Mammary epithelial cell (primary cell): ENCODE measurements at regions of chr7 and their contacts with region 1.

Region 1: DNA sequence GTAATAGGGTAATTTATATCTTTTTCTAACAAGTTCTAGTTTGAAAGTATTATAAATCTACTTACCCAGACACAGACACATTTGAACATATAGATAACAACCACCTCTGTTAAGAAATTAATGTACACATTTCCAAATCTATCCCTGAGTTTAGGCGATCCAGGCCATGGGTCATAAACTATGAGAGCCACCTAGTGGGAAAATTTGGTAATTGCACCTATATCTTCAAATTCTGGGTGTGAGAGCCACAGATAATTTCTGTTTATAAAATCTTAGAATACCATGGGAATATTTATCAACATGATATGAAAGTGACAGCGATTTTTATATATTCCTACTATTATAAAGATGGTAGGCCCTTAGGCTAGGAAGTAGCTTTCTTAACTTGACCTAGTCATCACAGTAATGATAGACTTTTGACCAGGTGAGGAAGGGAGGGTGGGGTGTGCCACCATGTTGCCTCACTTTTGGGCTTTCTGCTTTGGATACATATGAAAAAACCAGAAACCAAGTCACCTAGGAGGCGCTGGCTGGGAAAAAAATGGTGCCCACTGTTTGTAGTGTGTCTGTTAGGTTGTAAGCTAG is 8.0 kb upstream of the EPHA1 start:
- DNase-seq: no peak
- H3K4me3 ChIP-seq: peak overlapping the region in 2 of 3 experiments; percentile 33 to 38
- H3K27ac ChIP-seq: peak overlapping the region; percentile 89
- H3K4me1 ChIP-seq: peaks cover 33% of the 10 kb centered on the region
- H3K27me3 ChIP-seq: no peaks in the 10 kb centered on the region
- CTCF ChIP-seq: peak; percentile 61 to 70

Region 2: DNA sequence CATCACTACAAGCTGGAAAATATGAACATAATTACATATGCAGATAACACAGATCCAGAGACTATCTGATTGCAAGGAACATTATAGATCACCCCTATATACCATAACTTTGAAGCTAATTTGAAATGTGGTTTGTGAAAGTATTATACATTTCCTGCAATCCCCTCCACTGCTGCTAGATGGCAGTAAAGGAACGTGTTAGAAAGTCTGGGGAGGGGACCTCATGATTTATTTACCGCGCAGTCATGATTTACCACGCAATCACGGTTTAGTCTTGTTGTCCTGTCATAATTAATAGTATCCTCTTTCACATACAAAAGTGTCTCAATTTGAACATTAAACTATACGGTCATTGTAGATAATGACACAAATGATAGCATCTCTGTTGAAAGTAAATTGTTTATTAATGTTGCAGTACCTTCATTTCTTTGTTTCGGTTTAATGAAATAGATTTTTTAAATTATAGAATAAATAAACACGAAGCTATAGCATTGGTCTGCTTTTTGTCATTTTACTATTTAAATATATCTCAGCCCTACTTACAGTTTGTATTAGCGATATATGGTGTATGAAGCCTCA is 812.7 kb before region 1 on chr7:
- CTCF ChIA-PET with region 1: no interaction called
- dilution Hi-C with region 1: no loop called
- in situ Hi-C with region 1: no loop called
- intact Hi-C with region 1: no loop called
- DNase-seq: peak; percentile 32
- H3K4me3 ChIP-seq: no peak overlapping the region
- H3K27ac ChIP-seq: no peak overlapping the region
- H3K4me1 ChIP-seq: no peaks in the 10 kb centered on the region
- H3K27me3 ChIP-seq: no peaks in the 10 kb centered on the region
- CTCF ChIP-seq: peak; percentile 88 to 89

Region 3: DNA sequence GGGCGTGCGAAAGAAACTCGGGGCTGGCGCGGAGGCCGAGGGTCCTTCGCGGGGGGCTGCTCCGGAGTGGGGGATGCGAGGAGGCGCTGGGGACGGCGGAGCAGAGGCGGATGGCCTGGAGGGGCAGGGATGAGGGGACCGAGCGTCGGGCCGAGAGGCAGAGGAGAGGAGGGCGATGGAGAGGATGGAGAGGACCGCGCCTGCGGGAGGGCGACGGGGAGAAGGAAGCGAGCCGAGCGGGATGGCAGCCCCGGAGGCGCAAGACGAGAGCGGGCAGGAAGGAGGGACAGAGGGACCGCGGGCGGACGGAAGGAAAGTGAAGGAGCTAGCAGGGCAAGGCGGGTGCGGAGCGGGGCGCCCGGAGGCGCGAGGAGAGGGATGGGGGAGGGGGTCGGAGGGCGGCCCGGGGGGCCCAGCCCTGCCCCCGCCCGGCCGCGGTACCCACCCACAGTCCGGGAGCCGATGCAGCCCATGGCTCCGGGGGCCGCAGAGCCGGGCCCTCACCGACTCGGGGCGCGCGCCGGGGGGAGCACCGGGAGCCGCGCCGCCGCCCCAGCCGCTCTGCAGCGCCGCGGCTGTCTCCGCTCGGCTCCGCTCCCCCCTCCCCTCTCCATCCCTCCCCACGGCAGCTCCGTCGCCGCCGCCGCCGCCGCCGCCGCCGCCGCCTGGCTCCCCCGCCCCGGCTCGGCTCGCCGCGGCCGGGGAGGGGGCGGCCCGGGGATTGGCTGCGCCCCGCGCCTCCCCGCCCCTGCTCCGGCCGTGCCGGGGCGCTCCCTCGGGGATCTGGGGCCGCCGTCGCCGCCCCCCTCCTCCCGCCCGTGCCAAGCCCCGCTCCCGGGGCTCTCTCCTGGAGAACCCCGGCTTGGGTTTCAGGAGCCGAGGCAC is 54.3 kb before region 1 on chr7 and contains the start of gene FAM131B:
- CTCF ChIA-PET with region 1: no interaction called
- dilution Hi-C with region 1: no loop called
- in situ Hi-C with region 1: no loop called
- intact Hi-C with region 1: no loop called
- DNase-seq: no peak
- H3K4me3 ChIP-seq: peak within 1 kb of the TSS; percentile 21 to 59 (median 53)
- H3K27ac ChIP-seq: no peak within 1 kb of the TSS
- H3K4me1 ChIP-seq: peaks cover 4% of the 10 kb centered on the region
- H3K27me3 ChIP-seq: peaks cover 17% of the 10 kb centered on the region
- CTCF ChIP-seq: no peak
- total RNA-seq, gene FAM131B: 0.71 to 1.5 TPM

Region 4: DNA sequence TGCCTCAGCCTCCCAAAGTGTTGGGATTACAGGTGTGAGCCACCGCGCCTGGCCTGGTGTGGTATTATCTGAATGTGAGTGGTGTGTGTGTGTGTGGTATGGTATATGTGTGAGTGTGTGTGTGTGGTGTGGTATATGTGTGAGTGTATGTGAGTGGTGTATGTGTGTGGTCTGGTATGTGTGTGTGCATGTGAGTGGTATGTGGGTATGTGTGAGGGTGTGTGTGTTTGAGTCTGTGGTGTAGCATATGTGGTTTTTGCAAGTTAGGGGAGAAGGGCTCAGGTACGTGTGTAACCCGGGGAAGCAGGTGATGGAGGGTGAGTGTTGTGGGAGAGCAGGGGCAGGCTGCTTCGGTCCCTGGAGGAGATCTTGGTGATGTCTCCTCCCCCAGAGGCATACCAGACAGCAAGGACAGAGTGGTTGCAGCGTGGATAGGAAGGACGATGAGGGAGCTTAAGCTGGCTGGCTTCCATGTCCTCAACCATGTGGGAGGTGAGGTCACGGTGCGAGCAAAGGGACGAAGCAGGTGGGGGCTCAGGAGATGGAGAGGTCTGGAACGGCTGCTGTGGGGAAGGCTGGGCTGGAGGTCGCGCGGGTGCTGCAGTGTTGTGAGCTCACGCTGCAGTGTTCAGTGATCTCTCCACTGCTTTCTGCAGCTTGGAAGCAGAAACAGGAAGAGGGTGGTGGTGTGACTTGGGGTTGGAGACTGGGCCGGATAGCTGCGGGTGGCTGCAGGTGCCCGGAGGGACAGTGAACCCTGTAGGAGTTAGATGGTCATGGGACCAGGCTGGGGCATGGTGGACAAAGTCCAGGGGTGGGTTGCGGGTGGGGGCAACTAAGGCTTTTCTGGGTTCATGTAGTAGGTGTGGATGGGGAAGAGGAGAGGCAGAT is 30.5 kb before region 1 on chr7:
- CTCF ChIA-PET with region 1: no interaction called
- dilution Hi-C with region 1: no loop called
- in situ Hi-C with region 1: no loop called
- intact Hi-C with region 1: no loop called
- DNase-seq: no peak
- H3K4me3 ChIP-seq: no peak overlapping the region
- H3K27ac ChIP-seq: no peak overlapping the region
- H3K4me1 ChIP-seq: peaks cover 75% of the 10 kb centered on the region
- H3K27me3 ChIP-seq: no peaks in the 10 kb centered on the region
- CTCF ChIP-seq: no peak

Region 5: GRCh38 chr7:143510854-143511592 is 94.4 kb after region 1 on chr7:
- CTCF ChIA-PET with region 1: no interaction called
- dilution Hi-C with region 1: no loop called
- in situ Hi-C with region 1: no loop called
- intact Hi-C with region 1: loop called (anchors 5 kb)
- DNase-seq: no peak
- H3K4me3 ChIP-seq: no peak overlapping the region
- H3K27ac ChIP-seq: no peak overlapping the region
- H3K4me1 ChIP-seq: peaks cover 25% of the 10 kb centered on the region
- H3K27me3 ChIP-seq: no peaks in the 10 kb centered on the region
- CTCF ChIP-seq: no peak